ENCODE measurements at regions of chr2 and their contacts with region 1.

Region 1: DNA sequence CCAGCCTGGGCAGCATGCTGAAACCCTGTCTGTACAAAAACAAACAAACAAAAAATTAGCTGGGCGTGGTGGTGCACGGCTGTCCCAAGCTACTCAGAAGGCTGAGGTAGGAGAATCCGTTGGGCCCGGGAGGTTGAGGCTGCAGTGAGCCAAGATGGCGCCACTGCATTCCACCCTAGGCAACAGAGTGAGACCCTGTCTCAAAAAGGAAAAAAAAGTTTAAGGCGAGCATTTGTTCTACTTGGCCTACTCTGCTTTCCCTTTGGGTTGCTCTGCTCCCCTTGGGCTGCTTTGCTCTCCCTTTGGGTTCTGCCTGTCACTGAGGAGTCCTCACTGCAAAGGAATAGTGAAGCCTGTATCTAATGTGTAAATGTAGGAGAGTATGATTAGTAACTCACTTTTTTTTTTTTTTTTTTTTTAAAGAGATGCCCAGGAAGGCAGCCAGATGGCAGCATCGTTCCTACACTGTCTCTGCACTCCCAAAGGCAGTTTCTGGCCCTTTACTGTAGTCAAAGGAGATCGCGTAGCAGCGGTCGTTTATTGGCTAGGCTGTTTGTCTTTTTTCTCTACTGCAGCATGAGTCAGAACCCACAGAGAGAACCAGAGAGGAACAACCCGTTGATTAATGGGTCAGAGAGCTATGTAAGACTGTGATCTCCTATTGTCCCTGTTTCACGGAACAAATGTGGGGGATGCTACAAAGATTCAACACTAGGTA is 118.3 kb upstream of the CWC22 start:
- DNase-seq: peak; percentile 94
- H3K4me3 ChIP-seq: no peak overlapping the region
- H3K27ac ChIP-seq: no peak overlapping the region
- H3K4me1 ChIP-seq: peaks cover 29% of the 10 kb centered on the region
- H3K27me3 ChIP-seq: no peaks in the 10 kb centered on the region
- CTCF ChIP-seq: peak; percentile 70 to 77

Region 2: GRCh38 chr2:180240774-180241173 is 115.4 kb after region 1 on chr2:
- CTCF ChIA-PET with region 1: interaction called, 6 read pairs
- dilution Hi-C with region 1: no loop called
- in situ Hi-C with region 1: no loop called
- intact Hi-C with region 1: loop called (anchors 1 kb)
- DNase-seq: peak; percentile 27
- H3K4me3 ChIP-seq: no peak overlapping the region
- H3K27ac ChIP-seq: no peak overlapping the region
- H3K4me1 ChIP-seq: no peaks in the 10 kb centered on the region
- H3K27me3 ChIP-seq: no peaks in the 10 kb centered on the region
- CTCF ChIP-seq: peak; percentile 40 to 62

Region 3: GRCh38 chr2:180604077-180604476 is 478.7 kb after region 1 on chr2:
- CTCF ChIA-PET with region 1: no interaction called
- dilution Hi-C with region 1: no loop called
- in situ Hi-C with region 1: no loop called
- intact Hi-C with region 1: loop called (anchors 10 kb)
- DNase-seq: peak; percentile 8
- H3K4me3 ChIP-seq: no peak overlapping the region
- H3K27ac ChIP-seq: no peak overlapping the region
- H3K4me1 ChIP-seq: no peaks in the 10 kb centered on the region
- H3K27me3 ChIP-seq: no peaks in the 10 kb centered on the region
- CTCF ChIP-seq: peak; percentile 56 to 57

Region 4: GRCh38 chr2:180980106-180980942 is 854.9 kb after region 1 on chr2 and contains the start of gene UBE2E3:
- CTCF ChIA-PET with region 1: interaction called, 6 read pairs
- dilution Hi-C with region 1: no loop called
- in situ Hi-C with region 1: no loop called
- intact Hi-C with region 1: loop called (anchors 1 kb)
- DNase-seq: peak; percentile 67
- H3K4me3 ChIP-seq: peak within 1 kb of the TSS; percentile 62 to 82 (median 80)
- H3K27ac ChIP-seq: peak within 1 kb of the TSS; percentile 72
- H3K4me1 ChIP-seq: peaks cover 23% of the 10 kb centered on the region
- H3K27me3 ChIP-seq: no peaks in the 10 kb centered on the region
- CTCF ChIP-seq: peak; percentile 20 to 77
- total RNA-seq, gene UBE2E3: 65.0 to 86.3 TPM

Region 5: GRCh38 chr2:181457121-181457740 is 1331.8 kb after region 1 on chr2 and contains the start of gene ITGA4:
- CTCF ChIA-PET with region 1: no interaction called
- dilution Hi-C with region 1: no loop called
- in situ Hi-C with region 1: loop called (anchors 25 kb)
- intact Hi-C with region 1: loop called (anchors 5 kb)
- DNase-seq: peak; percentile 75
- H3K4me3 ChIP-seq: peak within 1 kb of the TSS; percentile 57 to 74 (median 70)
- H3K27ac ChIP-seq: no peak within 1 kb of the TSS
- H3K4me1 ChIP-seq: peaks cover 17% of the 10 kb centered on the region
- H3K27me3 ChIP-seq: no peaks in the 10 kb centered on the region
- CTCF ChIP-seq: peak; percentile 56 to 78
- total RNA-seq, gene ITGA4: 24.9 to 59.7 TPM

Region 6: DNA sequence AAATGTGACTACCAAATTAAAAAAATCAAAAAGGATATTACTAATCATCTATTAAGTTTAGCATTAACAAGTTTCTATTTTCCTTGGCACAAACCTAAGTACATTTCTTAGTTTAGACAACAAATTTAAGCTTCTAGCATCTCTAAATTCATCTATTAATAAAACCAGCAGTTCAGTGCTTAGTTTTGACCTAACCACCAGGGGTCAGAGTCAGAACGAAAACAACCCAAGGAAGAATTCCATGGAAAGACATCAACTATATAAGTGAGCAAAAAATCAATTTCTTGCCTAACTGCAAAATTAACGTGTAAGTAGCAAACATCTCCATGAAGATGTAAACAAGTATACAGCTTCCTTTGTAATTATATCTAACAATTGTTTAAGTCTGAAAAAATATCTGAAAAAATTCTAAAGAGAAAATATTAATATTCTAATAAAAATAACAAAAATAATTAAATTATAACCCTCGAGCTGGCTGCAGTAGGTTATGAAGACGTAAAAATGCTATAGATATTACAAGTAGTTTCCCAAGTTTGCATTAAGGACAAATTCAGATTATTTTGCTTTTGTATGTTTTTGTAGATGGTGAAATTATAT is 1447.8 kb after region 1 on chr2:
- CTCF ChIA-PET with region 1: no interaction called
- dilution Hi-C with region 1: no loop called
- in situ Hi-C with region 1: no loop called
- intact Hi-C with region 1: loop called (anchors 10 kb)
- DNase-seq: peak; percentile 12
- H3K4me3 ChIP-seq: no peak overlapping the region
- H3K27ac ChIP-seq: no peak overlapping the region
- H3K4me1 ChIP-seq: peaks cover 4% of the 10 kb centered on the region
- H3K27me3 ChIP-seq: no peaks in the 10 kb centered on the region
- CTCF ChIP-seq: peak; percentile 39 to 65

Region 7: DNA sequence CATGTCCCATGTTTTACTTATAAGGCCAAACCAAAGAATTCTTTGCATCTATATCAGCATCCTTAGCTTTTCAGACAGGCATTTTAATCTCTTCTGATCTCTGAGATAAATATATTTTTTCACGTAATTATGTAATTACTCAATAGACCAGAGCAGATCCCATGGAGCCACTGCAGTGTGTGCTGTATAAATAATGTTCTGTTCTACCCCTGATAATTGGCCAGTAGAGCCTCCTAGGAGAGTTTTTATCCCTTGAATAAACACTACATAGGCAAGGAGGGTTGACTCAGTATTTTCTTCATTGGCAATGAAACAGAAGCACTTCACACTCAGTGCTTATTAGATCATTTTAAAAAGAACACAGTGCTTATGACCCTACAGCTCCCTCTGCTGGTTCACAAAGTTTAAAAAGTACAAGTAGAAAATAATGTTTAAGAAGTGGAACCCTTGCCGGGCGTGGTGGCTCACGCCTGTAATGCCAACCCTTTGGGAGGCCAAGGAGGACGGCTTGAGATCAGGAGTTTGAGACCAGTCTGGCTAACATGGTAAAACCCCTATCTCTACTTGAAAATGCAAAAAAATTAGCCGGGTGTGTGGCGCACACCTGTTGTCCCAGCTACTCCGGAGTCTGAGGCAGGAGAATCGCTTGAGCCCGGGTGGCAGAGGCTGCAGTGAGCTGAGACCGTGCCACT is 1952.2 kb after region 1 on chr2:
- CTCF ChIA-PET with region 1: no interaction called
- dilution Hi-C with region 1: no loop called
- in situ Hi-C with region 1: no loop called
- intact Hi-C with region 1: loop called (anchors 10 kb)
- DNase-seq: peak; percentile 64
- H3K4me3 ChIP-seq: no peak overlapping the region
- H3K27ac ChIP-seq: no peak overlapping the region
- H3K4me1 ChIP-seq: peaks cover 7% of the 10 kb centered on the region
- H3K27me3 ChIP-seq: no peaks in the 10 kb centered on the region
- CTCF ChIP-seq: peak; percentile 25 to 69

Measured in mammary epithelial cell (primary cell).